ENCODE measurements at regions of chr22 and their contacts with region 1.

Region 1: DNA sequence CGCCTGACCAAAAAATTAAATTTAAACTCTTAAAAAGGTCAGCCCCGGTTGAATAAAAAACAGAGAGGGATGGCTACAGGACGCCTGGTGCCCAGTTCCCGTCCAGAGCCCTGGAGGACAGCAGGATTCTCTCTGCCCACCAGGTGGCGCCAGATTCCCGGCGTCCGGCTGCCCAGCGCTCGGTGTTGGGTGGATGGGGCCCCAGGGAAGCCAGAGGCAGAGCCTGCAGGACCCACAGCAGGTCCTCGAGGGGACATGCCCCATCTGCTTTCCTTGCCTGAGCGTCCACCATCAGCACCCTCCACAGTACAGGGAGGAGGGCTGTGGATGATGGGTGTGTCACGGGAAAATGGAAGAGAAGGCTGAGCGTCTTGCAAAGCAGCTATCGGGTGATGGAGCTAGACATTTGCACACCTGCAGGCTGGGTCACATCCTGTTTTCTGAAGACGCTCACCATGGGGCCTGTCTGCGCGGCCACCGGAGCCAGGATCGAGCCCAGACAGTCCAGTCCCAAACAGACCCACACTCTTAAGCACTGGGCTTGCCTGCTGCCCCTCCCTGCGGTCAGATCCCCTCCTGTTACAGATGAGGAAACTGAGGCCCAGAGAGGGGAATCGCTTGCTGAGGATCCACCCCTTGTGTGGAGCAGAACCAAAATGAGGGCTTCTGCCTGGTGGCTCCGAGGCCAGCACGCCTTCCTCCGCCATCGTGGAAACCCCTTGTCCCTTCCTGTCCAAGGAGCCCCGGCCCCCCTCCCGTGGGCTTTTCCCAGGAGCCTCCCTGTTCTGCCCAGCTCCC is 18.5 kb upstream of the CBX7 start:
- DNase-seq: peak; percentile 75 to 91 (median 87)
- H3K4me3 ChIP-seq: no peak overlapping the region
- H3K27ac ChIP-seq: no peak overlapping the region
- H3K4me1 ChIP-seq: peaks cover 16% of the 10 kb centered on the region
- H3K27me3 ChIP-seq: no peaks in the 10 kb centered on the region
- CTCF ChIP-seq: peak; percentile 96 to 97 (median 96)
- EP300 ChIP-seq: no peak
- POLR2A ChIP-seq: no peak

Region 2: DNA sequence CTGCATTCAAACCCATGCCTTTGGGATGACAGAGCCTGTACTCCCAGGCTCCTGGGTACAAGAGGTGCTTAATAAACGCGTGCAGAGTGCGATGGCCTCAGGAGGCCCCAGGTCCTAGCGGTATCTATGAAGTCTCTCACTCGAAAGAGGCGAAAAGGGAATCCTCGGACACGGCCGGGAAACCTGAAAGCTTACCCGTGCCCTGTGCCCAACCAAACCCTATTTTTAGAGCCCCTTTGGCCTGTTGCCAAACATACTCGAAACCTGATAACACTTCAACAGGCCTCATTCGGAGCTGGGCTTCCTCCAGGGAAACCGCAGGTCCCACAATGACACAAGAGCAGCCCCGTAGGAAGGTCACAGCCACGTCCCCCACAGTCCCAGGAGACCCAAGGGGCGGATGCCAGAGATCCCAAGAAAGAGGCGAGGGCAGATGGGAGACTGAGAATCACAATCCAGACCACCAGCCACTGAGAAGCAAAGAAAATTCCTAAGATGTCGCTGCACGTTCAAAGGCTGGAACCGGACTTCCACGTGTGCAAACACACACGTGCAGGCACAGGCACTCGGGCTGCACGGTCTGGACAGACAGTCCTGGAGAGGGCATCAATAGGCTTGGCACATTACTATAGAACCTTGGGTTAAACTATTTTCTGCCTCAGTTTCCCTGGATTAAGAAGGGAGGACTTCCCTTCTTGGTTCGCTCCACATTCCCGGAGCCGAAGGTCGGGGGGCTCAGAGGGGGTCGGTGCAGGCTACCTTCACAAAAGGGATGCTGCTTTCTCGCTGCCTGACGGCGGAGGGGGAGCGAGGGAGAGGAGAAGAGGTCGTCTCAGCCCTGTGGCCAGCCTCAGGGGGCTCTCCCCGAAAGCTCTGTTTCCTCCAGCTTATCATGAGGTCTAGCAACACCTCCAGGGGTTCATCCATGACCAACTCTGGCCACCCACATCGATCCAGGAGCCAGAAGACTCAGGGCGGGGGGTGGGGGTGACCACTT is 65.6 kb after region 1 on chr22:
- intact Hi-C with region 1: loop called in 1 of 4 experiments (anchors 5 kb)
- DNase-seq: no peak
- H3K4me3 ChIP-seq: no peak overlapping the region
- H3K27ac ChIP-seq: no peak overlapping the region
- H3K4me1 ChIP-seq: peaks cover 1% of the 10 kb centered on the region
- H3K27me3 ChIP-seq: no peaks in the 10 kb centered on the region
- CTCF ChIP-seq: no peak
- EP300 ChIP-seq: no peak
- POLR2A ChIP-seq: no peak

Region 3: GRCh38 chr22:39309881-39310714 is 139.1 kb after region 1 on chr22:
- intact Hi-C with region 1: loop called in 3 of 4 experiments (anchors 2 kb)
- DNase-seq: no peak
- H3K4me3 ChIP-seq: no peak overlapping the region
- H3K27ac ChIP-seq: no peak overlapping the region
- H3K4me1 ChIP-seq: peaks cover 5% of the 10 kb centered on the region
- H3K27me3 ChIP-seq: no peaks in the 10 kb centered on the region
- CTCF ChIP-seq: no peak
- EP300 ChIP-seq: no peak
- POLR2A ChIP-seq: no peak

Region 4: GRCh38 chr22:39319270-39320022 is 148.4 kb after region 1 on chr22 and contains the start of gene RPL3:
- intact Hi-C with region 1: loop called in 2 of 4 experiments (anchors 2 kb)
- DNase-seq: peak; percentile 95 to 99 (median 98)
- H3K4me3 ChIP-seq: peak within 1 kb of the TSS; percentile 83
- H3K27ac ChIP-seq: peak within 1 kb of the TSS; percentile 88 to 93
- H3K4me1 ChIP-seq: peaks cover 11% of the 10 kb centered on the region
- H3K27me3 ChIP-seq: no peaks in the 10 kb centered on the region
- CTCF ChIP-seq: peak in 2 of 3 donors; percentile 33 to 51
- EP300 ChIP-seq: peak; percentile 74
- POLR2A ChIP-seq: peak; percentile 92
- total RNA-seq, gene RPL3: 3,686 to 6,016 (median 4,727) TPM

Region 5: DNA sequence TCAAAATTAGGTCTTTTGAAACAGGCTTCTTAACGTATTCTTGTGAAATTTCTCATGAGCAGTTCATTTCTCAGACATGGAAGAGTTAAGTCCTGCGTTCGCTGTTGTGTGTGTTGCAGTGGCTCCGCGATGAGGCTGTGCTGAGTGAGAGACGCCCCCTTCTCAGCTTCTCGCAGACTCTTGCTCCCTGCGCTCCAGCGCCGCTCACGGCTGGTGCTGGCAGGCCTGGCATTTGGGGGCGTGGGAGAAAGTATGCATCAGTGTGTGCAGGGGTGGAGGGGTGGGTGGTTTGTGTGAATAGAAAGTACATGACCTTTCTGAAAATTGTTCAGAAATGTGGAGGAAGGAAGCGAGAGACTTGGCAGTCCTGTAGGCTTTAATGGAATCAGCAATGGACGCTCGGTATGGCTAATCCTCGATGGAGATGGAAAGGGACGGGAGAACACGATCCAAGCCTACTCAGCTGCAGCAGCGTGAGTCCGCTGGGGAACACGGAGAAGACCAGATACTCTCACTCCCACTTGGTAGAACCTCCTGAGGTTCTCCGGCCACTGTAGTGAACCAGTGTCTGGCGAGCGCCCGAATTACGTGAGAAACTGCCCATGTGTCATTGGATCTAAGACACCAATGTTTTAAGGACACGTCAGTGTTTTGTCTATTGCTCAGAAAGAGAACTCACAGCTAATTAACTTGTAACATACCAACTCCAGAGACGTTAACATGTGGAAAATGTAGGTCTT is 234.5 kb after region 1 on chr22:
- intact Hi-C with region 1: loop called in 1 of 4 experiments (anchors 10 kb)
- DNase-seq: peak; percentile 54 to 75 (median 64)
- H3K4me3 ChIP-seq: no peak overlapping the region
- H3K27ac ChIP-seq: peak overlapping the region in 1 of 2 donors; percentile 29
- H3K4me1 ChIP-seq: peaks cover 14% of the 10 kb centered on the region
- H3K27me3 ChIP-seq: no peaks in the 10 kb centered on the region
- CTCF ChIP-seq: peak in 1 of 3 donors; percentile 9
- EP300 ChIP-seq: no peak
- POLR2A ChIP-seq: no peak

Region 6: DNA sequence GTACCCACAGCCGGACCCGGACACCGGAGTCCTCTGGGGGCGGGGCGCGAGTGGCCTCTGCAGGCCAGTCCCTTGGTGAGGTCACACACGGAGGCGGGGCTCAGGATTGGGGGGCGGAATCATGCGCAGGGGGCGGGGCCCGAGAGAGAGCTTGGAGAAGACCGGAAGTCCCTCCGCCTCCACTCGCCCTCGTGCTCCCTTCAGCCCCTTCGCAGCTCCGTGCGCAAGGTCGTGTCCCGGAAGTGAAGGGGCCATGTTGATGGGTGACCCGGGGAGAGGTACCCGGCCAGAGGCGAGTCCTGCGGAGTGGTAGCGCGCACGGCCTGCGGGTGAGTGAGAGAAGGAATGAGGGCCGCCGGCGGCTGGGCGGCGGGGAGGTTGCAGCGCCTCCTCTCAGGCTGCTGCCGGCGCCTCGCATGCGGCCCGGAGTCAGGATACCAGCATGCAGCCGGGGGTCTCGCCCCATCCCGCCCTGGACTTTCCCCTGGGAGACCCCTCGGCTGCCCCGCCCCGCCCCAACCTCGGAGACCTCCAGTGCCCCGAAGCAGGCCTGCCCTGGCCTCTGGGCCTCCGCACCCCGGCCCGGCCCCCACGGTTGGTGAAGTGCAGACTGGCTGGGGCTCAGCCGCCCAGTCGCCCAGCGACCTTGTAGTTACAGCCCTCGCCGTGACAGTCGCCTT is 331.2 kb after region 1 on chr22 and contains the start of gene MIEF1:
- intact Hi-C with region 1: loop called in 1 of 4 experiments (anchors 10 kb)
- DNase-seq: peak; percentile 96 to 98 (median 98)
- H3K4me3 ChIP-seq: peak within 1 kb of the TSS; percentile 95
- H3K27ac ChIP-seq: peak within 1 kb of the TSS; percentile 69 to 91
- H3K4me1 ChIP-seq: peaks cover 15% of the 10 kb centered on the region
- H3K27me3 ChIP-seq: no peaks in the 10 kb centered on the region
- CTCF ChIP-seq: no peak
- EP300 ChIP-seq: no peak
- POLR2A ChIP-seq: peak; percentile 50
- total RNA-seq, gene MIEF1: 13.1 to 23.9 (median 19.9) TPM

Region 7: DNA sequence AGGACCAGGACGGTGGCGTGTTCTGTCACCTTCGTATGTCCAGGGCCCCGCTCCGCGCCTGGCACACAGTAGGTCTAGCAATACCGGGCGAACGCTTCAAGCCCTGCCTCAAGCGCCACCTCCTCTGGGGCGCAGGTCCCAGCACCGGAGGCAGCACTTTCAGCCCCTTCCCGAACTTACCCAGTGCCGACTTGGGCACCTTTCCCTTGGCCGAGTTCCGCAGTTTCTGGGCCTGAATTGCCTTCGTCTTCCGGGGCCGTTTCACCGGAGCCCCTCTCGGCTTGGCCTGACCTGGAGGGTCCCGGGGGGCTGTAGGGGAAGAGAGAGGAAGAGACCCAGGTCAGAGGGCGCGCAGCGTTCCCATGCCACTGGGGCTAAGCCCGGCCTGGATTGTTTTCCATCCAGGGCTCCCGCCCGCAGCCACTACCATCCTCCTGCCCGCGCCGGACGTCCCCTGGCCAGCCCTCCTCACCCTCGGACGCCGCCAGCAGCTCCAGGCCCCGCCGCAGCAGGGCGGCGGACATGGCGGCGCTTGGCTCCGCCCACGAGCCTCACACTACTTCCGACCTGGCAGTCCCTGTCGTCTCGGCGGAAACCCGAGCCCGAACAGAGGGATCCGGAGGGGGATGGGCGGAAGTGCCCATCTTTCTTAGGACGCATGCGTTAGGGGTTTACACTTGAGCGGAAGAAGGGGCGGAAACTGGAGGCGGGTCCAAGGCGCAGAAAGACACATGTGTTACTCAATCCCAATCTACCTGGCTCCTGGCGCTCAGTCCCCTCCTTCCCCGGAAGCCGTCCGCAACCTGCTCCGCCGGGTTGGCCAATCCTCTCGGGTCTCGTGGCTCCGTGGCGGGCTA is 361.4 kb after region 1 on chr22 and contains the start of gene RPS19BP1:
- intact Hi-C with region 1: loop called (anchors 5 to 10 kb)
- DNase-seq: peak; percentile 99 to 100 (median 100)
- H3K4me3 ChIP-seq: peak within 1 kb of the TSS; percentile 68
- H3K27ac ChIP-seq: peak within 1 kb of the TSS; percentile 38 to 75
- H3K4me1 ChIP-seq: peaks cover 14% of the 10 kb centered on the region
- H3K27me3 ChIP-seq: no peaks in the 10 kb centered on the region
- CTCF ChIP-seq: no peak
- EP300 ChIP-seq: no peak
- POLR2A ChIP-seq: peak; percentile 68
- total RNA-seq, gene RPS19BP1: 41.9 to 117 (median 44.2) TPM

Measured in ovary (tissue), 10 donors.